ENCODE measurements at regions of chr6 and their contacts with region 1.

Region 1: GRCh38 chr6:41591859-41592502 is 45.8 kb downstream of the FOXP4 start:
- DNase-seq: peak; percentile 46
- ATAC-seq: peak; percentile 88
- H3K4me3 ChIP-seq: no peak overlapping the region
- H3K27ac ChIP-seq: no peak overlapping the region
- H3K4me1 ChIP-seq: peaks cover 0 to 3% of the 10 kb centered on the region in 2 experiments; a peak in 1 of 4 replicates
- H3K27me3 ChIP-seq: no peaks in the 10 kb centered on the region
- CTCF ChIP-seq: peak; percentile 89 to 92 (median 90)
- POLR2A ChIP-seq: no peak
- RAD21 ChIP-seq: peak; percentile 91

Region 2: GRCh38 chr6:41424370-41425058 is 167.5 kb before region 1 on chr6:
- CTCF ChIA-PET with region 1: interaction called, 4 read pairs
- POLR2A ChIA-PET with region 1: no interaction called
- RAD21 ChIA-PET with region 1: no interaction called
- intact Hi-C with region 1: loop called (anchors 1 kb)
- DNase-seq: peak; percentile 66
- ATAC-seq: peak; percentile 62
- H3K4me3 ChIP-seq: no peak overlapping the region
- H3K27ac ChIP-seq: no peak overlapping the region
- H3K4me1 ChIP-seq: peaks cover 18 to 32% of the 10 kb centered on the region in 2 experiments
- H3K27me3 ChIP-seq: no peaks in the 10 kb centered on the region; the same call in 1 of the 2 replicates
- CTCF ChIP-seq: peak; percentile 89 to 94 (median 91)
- POLR2A ChIP-seq: no peak
- RAD21 ChIP-seq: peak; percentile 84

Region 3: DNA sequence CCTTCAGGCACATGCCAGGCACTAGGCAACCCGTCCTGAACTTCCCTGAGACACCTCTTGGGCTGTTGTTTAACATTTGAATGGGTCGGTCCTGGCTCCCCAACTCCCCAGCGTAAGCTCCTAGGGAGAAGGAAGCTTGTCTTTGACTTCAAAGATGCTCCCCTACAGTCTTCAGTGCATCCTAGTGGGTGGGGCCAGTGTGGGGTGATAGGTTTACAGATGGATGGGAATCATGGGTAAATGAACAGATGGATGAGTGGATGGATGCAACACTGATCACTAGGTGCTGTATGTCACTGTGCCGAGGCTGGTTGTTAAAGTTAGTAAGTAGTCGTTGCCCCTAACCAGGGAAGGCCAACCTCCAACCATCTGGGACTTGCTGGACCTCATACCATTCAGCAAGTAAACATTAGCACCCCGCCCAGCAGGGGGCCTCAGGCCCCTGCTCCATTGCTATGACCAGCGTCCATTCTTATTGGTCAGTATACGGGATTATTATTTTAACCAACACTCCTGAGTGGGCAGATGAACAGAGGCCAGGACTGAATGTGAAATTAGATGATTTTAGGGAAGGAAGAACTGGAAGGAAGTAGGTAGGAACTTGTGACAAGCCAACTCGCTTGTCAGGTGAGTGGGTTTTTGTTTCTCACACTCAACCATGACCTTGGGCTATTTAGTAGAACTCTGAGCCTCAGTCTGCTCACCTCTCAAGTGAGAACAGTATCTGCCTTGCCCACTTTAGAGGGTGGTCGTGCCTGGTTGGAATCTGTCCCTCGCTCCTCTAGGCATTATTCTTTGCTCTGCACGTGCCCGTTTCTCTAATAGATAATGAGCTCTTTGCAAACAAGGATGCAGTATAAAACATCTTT is 128.7 kb before region 1 on chr6:
- CTCF ChIA-PET with region 1: interaction called, 5 read pairs
- POLR2A ChIA-PET with region 1: no interaction called
- RAD21 ChIA-PET with region 1: no interaction called
- intact Hi-C with region 1: loop called (anchors 1 kb)
- DNase-seq: peak; percentile 27
- ATAC-seq: peak; percentile 85
- H3K4me3 ChIP-seq: no peak overlapping the region
- H3K27ac ChIP-seq: no peak overlapping the region
- H3K4me1 ChIP-seq: peaks cover 6 to 13% of the 10 kb centered on the region in 2 experiments; a peak in 3 of 4 replicates
- H3K27me3 ChIP-seq: no peaks in the 10 kb centered on the region; the same call in 1 of the 2 replicates
- CTCF ChIP-seq: peak; percentile 17 to 71 (median 49); a peak in 5 of 6 replicates
- POLR2A ChIP-seq: no peak
- RAD21 ChIP-seq: peak; percentile 85

Region 4: DNA sequence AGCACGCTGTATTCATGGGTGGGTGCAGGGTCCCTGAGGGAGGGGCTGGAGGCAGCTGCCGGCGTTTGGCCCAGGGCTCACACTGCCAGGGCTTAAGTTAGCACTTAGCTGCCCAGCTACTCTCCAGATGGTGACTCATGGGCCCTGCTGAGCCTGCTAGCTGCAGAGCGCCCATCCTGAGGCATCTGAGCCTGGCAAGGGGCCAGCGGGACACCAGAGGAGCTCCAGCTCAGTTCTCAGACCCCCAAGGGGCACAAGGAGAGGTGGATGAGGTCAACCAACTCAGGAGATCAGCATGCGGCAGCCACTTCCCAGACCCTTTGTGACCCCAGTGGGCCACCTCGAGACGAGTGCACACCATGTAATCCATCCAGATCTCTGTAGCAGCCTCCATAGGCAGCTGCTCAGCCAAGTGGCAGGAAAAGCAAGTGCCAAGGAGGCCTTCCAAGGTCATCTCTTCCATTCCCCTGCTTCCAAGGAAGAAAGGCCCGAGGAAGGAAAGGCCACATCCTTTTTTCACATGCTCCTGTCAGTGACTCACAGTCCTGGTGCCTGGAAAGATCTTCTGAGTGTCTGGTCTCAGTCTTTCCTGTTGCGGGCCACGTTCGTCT is 10.5 kb before region 1 on chr6:
- CTCF ChIA-PET with region 1: interaction called, 14 read pairs
- POLR2A ChIA-PET with region 1: no interaction called
- RAD21 ChIA-PET with region 1: no interaction called
- intact Hi-C with region 1: no loop called
- DNase-seq: peak; percentile 33
- ATAC-seq: peak; percentile 67
- H3K4me3 ChIP-seq: no peak overlapping the region
- H3K27ac ChIP-seq: peak overlapping the region; percentile 67
- H3K4me1 ChIP-seq: peaks cover 46 to 53% of the 10 kb centered on the region in 2 experiments
- H3K27me3 ChIP-seq: no peaks in the 10 kb centered on the region
- CTCF ChIP-seq: no peak
- POLR2A ChIP-seq: no peak
- RAD21 ChIP-seq: no peak